Esophagus muscularis mucosa (tissue), 4 donors: ENCODE measurements at regions of chr10 and their contacts with region 1.

Region 1: DNA sequence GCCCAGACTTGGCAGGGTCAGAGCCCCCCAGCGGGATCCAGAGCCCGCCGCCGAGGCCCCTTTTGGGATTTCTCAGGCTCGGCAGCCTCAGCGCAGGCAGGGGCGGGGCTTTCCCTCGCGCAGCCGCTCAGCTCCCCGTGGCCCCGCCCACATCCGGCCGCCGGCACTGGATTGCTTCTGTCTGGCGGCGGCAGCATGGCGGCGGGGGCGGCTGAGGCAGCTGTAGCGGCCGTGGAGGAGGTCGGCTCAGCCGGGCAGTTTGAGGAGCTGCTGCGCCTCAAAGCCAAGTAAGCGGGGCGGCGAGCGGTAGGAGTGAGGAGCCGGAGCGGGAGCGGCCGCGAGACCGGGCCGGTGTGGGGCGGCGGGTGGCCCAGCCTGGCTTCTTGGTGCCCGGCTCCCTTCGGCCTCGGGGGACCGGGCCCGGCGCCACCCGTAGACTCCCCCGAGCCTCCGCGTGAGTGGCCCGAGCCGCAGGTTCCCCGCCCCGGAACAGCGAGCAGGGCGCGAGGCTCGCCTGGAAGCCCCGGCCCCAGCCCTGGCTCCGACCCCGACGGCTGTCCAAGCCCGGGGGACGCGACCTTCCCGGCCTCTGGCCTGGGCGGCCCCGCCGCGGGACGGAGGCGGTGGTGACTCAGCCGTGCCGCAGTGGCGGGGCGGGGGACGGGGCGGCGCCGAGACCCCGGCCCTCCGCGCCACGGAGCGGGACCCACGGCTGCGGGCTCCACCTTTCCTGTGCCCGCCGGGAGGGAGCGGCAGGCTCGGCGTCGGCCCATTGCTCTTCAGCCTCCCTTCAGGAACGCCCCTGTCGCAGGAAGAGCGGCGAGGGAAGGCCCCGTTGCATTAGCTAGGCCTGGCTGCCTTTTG is at the start of gene GLRX3:
- DNase-seq: peak; percentile 95
- H3K4me3 ChIP-seq: peak within 1 kb of the TSS; percentile 87 to 100 (median 93)
- H3K27ac ChIP-seq: peak within 1 kb of the TSS; percentile 83 to 89 (median 86)
- H3K4me1 ChIP-seq: peaks cover 25 to 54% (median 52%) of the 10 kb centered on the region in 4 donors
- H3K27me3 ChIP-seq: no peaks in the 10 kb centered on the region
- CTCF ChIP-seq: peak in 1 of 3 experiments; percentile 22
- EP300 ChIP-seq: no peak
- POLR2A ChIP-seq: peak; percentile 36
- total RNA-seq, gene GLRX3: 44.9 to 61.4 (median 53.3) TPM

Region 2: GRCh38 chr10:129949891-129950291 is 186.6 kb before region 1 on chr10:
- intact Hi-C with region 1: no loop called
- DNase-seq: no peak
- H3K4me3 ChIP-seq: no peak overlapping the region
- H3K27ac ChIP-seq: peak overlapping the region; percentile 35 to 51 (median 40)
- H3K4me1 ChIP-seq: peaks cover 21 to 53% (median 27%) of the 10 kb centered on the region in 4 donors
- H3K27me3 ChIP-seq: peaks cover 0 to 70% (median 2%) of the 10 kb centered on the region in 4 donors
- CTCF ChIP-seq: no peak
- EP300 ChIP-seq: no peak
- POLR2A ChIP-seq: no peak

Region 3: DNA sequence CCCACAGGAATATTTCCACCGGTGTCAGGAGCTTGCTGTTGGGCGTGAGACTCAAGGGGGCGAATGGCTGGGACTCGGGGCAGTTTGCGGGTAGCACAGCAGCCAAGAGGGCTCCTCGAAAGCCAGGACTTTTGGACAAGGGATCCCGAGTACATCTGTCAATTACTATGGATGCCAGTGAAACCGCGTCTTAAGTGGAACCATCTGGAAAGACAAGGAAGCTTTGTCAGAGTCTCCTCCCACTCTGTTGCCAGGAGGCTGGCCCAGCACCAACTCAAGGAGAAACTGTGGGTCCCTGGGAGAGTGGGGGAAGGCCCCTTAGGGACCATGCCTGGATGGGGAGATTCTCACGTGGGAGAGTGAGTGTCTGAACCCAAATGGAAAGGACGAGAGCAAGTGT is 82.9 kb before region 1 on chr10:
- intact Hi-C with region 1: no loop called
- DNase-seq: no peak
- H3K4me3 ChIP-seq: no peak overlapping the region
- H3K27ac ChIP-seq: no peak overlapping the region
- H3K4me1 ChIP-seq: no peaks in the 10 kb centered on the region
- H3K27me3 ChIP-seq: peaks cover 0 to 9% (median 0%) of the 10 kb centered on the region in 4 donors
- CTCF ChIP-seq: no peak
- EP300 ChIP-seq: no peak
- POLR2A ChIP-seq: no peak

Region 4: GRCh38 chr10:130110246-130111112 is 26.0 kb before region 1 on chr10 and contains the start of gene C10orf143:
- intact Hi-C with region 1: loop called (anchors 2 kb)
- DNase-seq: peak; percentile 99
- H3K4me3 ChIP-seq: peak within 1 kb of the TSS; percentile 69 to 90 (median 74)
- H3K27ac ChIP-seq: peak within 1 kb of the TSS; percentile 92 to 94 (median 92)
- H3K4me1 ChIP-seq: peaks cover 11 to 36% (median 31%) of the 10 kb centered on the region in 4 donors
- H3K27me3 ChIP-seq: no peaks in the 10 kb centered on the region
- CTCF ChIP-seq: no peak
- EP300 ChIP-seq: no peak
- POLR2A ChIP-seq: peak; percentile 83
- total RNA-seq, gene C10orf143: 3.7 to 5.0 (median 4.3) TPM

Region 5: DNA sequence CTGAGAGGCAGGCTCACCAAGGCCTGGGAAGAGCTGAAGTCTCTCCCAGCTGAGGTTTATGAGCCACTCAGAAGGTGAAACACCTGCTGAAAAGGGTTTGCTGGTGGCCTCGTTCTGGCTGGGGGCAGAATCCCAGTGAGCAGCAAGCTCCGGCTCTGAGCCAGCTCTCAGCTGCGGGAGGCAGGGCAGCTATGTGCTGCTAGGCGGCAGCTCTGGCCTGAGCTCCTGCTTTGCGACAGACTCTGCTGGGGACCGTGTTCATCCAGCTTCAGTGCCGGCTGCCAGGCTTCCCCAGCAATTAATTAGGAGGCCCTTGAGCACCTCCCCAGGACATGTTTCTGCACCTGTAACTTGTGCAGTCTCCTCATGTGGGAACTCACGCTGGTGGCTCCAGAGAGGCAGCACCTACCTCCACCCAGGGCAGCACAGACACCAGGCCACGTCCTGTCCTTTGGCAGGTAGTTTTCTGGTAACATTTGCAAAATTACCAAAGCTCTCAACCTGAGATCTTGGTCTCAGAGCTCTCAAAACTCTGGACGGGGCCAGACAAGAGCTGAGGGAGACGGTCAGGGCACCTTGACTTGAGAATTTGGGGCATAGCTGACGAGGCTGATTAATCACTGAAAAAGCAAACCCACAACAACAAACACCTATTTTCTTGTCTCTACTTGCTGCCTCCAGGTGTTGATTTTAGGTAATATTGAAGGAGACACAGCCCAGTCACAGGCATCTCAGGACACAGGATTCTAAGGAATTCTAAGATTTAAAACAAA is 990.1 kb after region 1 on chr10:
- intact Hi-C with region 1: no loop called
- DNase-seq: no peak
- H3K4me3 ChIP-seq: no peak overlapping the region
- H3K27ac ChIP-seq: no peak overlapping the region
- H3K4me1 ChIP-seq: peaks cover 0 to 6% (median under 1%) of the 10 kb centered on the region in 4 donors
- H3K27me3 ChIP-seq: peaks cover 0 to 43% (median 3%) of the 10 kb centered on the region in 4 donors
- CTCF ChIP-seq: no peak
- EP300 ChIP-seq: no peak
- POLR2A ChIP-seq: no peak